Thyroid gland (tissue), 4 donors: ENCODE measurements at regions of chr19 and their contacts with region 1.

Region 1: GRCh38 chr19:7680606-7681339 is at the start of gene TRAPPC5:
- DNase-seq: peak; percentile 81 to 82
- H3K4me3 ChIP-seq: peak within 1 kb of the TSS; percentile 84 to 99 (median 96)
- H3K27ac ChIP-seq: peak within 1 kb of the TSS; percentile 54 to 86 (median 66)
- H3K4me1 ChIP-seq: peaks cover 6 to 9% of the 10 kb centered on the region in 2 donors
- H3K27me3 ChIP-seq: no peaks in the 10 kb centered on the region
- CTCF ChIP-seq: peak; percentile 24 to 99 (median 98)
- POLR2A ChIP-seq: peak in 1 of 2 donors; percentile 65
- total RNA-seq, gene TRAPPC5: 46.8 to 111 (median 93.1) TPM

Region 2: DNA sequence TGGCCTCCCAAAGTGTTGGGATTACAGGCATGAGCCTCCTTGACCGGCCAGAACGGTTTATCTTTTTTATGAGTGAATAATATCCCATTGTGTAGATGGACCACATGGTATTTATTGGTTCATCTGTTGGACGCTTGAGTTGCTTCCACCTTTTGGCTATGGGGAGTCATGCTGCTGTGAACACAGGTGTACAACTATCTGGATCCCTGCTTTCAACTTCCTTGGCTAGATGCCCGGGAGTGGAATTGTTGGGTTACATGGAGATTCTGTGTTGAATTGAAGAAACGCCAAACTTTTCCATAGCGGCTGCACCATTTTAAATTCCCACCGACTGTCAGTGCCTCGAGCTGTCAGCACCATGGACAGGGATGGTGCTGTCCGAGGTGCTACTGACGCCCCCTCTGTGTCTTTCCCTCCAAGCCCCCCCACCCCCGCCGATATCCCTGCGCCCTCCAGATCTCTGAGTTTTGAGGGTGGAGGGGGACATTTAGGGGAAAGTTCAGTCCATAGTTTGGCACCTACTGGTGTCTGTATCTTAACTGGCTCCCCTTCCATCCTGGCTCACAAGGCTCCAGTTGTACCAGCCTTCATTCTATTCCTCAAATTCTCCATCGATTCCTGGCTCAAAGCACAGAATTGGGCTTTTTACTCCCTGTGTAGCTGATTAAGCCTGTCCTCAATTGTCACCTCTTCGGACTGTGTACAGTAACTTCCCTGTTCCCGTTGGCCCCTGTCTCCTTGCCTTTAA is 118.0 kb before region 1 on chr19:
- intact Hi-C with region 1: loop called (anchors 2 kb)
- DNase-seq: no peak
- H3K4me3 ChIP-seq: no peak overlapping the region
- H3K27ac ChIP-seq: no peak overlapping the region
- H3K4me1 ChIP-seq: no peaks in the 10 kb centered on the region
- H3K27me3 ChIP-seq: no peaks in the 10 kb centered on the region
- CTCF ChIP-seq: no peak
- POLR2A ChIP-seq: no peak

Region 3: DNA sequence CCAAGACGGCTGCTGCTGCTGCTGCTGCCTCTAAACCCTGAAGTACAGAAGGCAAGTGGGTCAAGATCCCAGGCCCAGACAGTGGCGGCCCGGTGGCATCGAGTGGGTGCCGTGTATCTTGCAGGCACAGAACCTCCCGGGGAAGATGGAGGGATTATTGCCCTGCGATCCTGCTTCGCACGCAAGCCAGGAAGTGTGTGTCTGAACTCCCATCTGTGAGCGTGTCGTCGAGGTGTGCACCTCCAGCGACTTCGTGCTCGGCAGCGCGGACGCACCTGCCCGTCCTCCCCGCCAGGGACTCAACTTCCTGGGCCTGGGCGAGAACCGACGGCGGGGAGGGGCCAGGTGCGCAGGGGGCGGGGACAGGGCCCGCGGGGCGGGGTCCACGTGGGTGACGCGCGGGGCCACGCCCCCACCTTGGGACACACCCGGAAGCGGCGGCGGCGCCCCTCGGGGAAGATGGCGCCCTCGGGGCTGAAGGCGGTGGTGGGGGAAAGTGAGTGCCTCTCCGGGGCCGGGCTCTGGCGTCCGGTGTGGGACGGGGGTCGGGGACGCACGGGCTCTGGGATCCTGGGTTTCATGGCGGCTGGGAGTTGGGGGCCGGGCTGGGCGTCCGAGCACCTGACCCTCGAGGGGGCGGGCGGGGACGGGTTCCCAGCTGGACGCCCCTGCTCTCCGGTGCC is 43.9 kb before region 1 on chr19 and contains the start of gene STXBP2:
- intact Hi-C with region 1: loop called (anchors 5 kb)
- DNase-seq: peak; percentile 84 to 85
- H3K4me3 ChIP-seq: peak within 1 kb of the TSS; percentile 33 to 73 (median 48)
- H3K27ac ChIP-seq: peak within 1 kb of the TSS; percentile 42 to 78 (median 58)
- H3K4me1 ChIP-seq: peaks cover 4 to 15% of the 10 kb centered on the region in 2 donors
- H3K27me3 ChIP-seq: no peaks in the 10 kb centered on the region
- CTCF ChIP-seq: peak in 3 of 6 experiments; percentile 33 to 57 (median 34)
- POLR2A ChIP-seq: peak in 1 of 2 donors; percentile 64
- total RNA-seq, gene STXBP2: 48.8 to 89.2 (median 70.2) TPM

Region 4: GRCh38 chr19:7819337-7819736 is 138.6 kb after region 1 on chr19:
- intact Hi-C with region 1: no loop called
- DNase-seq: no peak
- H3K4me3 ChIP-seq: no peak overlapping the region
- H3K27ac ChIP-seq: no peak overlapping the region
- H3K4me1 ChIP-seq: no peaks in the 10 kb centered on the region
- H3K27me3 ChIP-seq: no peaks in the 10 kb centered on the region
- CTCF ChIP-seq: no peak
- POLR2A ChIP-seq: no peak

Region 5: GRCh38 chr19:7894564-7895561 is 214.1 kb after region 1 on chr19:
- intact Hi-C with region 1: no loop called
- DNase-seq: peak; percentile 13 to 50
- H3K4me3 ChIP-seq: no peak overlapping the region
- H3K27ac ChIP-seq: no peak overlapping the region
- H3K4me1 ChIP-seq: no peaks in the 10 kb centered on the region
- H3K27me3 ChIP-seq: no peaks in the 10 kb centered on the region
- CTCF ChIP-seq: no peak
- POLR2A ChIP-seq: no peak